Left lung (tissue), 14 donors: ENCODE measurements at regions of chr17 and their contacts with region 1.

Region 1: GRCh38 chr17:1186923-1187771 is 7.4 kb upstream of the ABR start:
- DNase-seq: peak; percentile 77 to 98 (median 90)
- ATAC-seq: peak; percentile 94
- H3K4me3 ChIP-seq: peak overlapping the region in 1 of 2 donors; percentile 21
- H3K27ac ChIP-seq: peak overlapping the region in 1 of 2 donors; percentile 57
- H3K4me1 ChIP-seq: peaks cover 22 to 71% of the 10 kb centered on the region in 2 donors
- H3K27me3 ChIP-seq: no peaks in the 10 kb centered on the region
- CTCF ChIP-seq: peak; percentile 97 to 99

Region 2: GRCh38 chr17:1122533-1123392 is 64.4 kb before region 1 on chr17:
- intact Hi-C with region 1: loop called in 1 of 2 experiments (anchors 5 kb)
- DNase-seq: peak in 3 of 4 donors; percentile 72 to 95 (median 80)
- ATAC-seq: peak; percentile 96
- H3K4me3 ChIP-seq: no peak overlapping the region
- H3K27ac ChIP-seq: peak overlapping the region in 1 of 2 donors; percentile 37
- H3K4me1 ChIP-seq: peaks cover 0 to 25% of the 10 kb centered on the region in 2 donors
- H3K27me3 ChIP-seq: no peaks in the 10 kb centered on the region
- CTCF ChIP-seq: peak; percentile 87 to 98